Activated B cell treated with CpG ODN at 0.5 μM for 24 hours (primary cell): ENCODE measurements at regions of chr12 and their contacts with region 1.

Region 1: DNA sequence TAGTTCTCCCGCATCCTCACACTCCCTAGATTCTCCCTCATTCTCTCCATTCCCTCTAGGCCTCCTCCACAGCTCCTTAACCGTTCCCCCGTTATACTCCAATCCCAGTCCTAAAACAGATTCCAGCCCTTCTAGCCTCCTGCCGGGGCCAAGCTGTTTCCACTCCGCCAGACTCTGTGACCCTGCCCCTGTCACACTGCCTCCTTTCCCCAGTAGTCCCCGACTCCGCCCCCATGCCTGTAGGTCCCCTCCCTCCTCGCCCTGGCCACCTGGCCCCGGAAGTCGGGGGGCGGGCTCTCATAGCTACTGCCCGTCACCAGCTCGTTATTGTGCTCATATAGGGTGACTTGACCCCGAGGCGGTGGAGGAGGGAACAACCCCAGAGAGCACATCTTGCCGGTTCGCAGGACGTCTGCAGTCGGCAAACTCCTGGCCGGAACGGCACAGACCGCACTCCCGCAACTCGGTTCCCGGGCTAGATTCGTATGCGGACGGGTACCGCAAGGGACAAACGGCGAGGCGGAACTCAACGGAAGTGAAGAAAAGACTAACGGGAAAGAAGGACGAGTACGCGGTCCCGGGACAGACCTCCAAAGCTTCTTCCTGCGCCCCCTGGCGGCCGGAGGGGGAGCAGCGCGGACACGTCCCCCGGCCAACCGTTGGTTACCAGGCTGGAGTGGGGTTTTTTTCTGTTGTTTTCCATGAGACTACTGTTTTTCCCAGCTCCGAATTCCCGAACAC is at the start of gene AAAS:
- DNase-seq: peak; percentile 93
- ATAC-seq: peak; percentile 84
- H3K4me3 Mint-ChIP-seq: peak within 1 kb of the TSS; percentile 95
- H3K27ac Mint-ChIP-seq: peak within 1 kb of the TSS; percentile 95
- H3K4me1 Mint-ChIP-seq: peaks cover 36% of the 10 kb centered on the region
- H3K27me3 Mint-ChIP-seq: no peaks in the 10 kb centered on the region
- CTCF ChIP-seq: peak; percentile 57
- total RNA-seq, gene AAAS: 57.3 and 72.1 TPM in 2 replicates

Region 2: DNA sequence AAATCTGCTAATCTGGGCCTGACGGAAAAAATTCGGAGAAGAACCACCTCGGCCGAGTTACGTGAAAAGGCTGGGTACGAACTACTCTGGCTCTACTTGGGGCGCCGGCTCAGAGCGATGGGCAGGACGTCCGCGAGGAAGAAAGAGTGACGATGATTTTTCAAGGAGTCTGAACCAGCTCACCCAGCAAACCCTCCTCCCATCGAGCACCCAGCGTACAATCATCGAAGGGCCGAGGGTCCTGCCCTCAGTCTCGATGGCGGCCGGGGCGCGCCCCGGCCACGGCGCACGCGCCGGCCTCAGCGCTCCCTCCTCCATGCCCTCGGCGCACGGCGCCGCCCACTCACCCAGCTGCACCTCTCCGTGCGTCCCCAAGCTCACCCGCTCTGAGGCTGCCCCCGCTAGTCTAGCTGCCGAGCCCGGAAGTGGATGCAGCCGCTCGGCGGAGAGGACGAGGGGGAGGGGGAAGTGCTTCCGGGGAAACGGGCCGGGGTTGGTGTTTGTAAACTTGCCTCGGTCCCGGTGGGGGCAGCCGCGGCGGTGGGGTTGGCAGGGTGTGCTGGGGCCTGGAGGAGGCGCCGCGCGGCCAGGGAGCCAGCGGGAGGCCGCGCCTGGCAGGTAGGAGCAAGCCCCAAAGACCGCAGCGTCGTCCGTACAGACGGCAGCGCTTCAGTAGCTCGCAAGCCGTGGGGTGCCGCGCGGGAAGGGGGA is 140.9 kb before region 1 on chr12 and contains the starts of genes CSAD and ZNF740:
- CTCF ChIA-PET with region 1: interaction called, 3 read pairs
- POLR2A ChIA-PET with region 1: interaction called, 8 read pairs
- intact Hi-C with region 1: loop called (anchors 1 kb)
- DNase-seq: peak; percentile 91
- ATAC-seq: peak; percentile 94
- H3K4me3 Mint-ChIP-seq: peak within 1 kb of the TSS; percentile 93
- H3K27ac Mint-ChIP-seq: peak within 1 kb of the TSS; percentile 98
- H3K4me1 Mint-ChIP-seq: peaks cover 53% of the 10 kb centered on the region
- H3K27me3 Mint-ChIP-seq: no peaks in the 10 kb centered on the region
- CTCF ChIP-seq: no peak
- total RNA-seq, gene CSAD: 25.7 and 34.6 TPM in 2 replicates
- total RNA-seq, gene ZNF740: 64.4 and 67.2 TPM in 2 replicates

Region 3: GRCh38 chr12:53251477-53252348 is 69.5 kb before region 1 on chr12:
- CTCF ChIA-PET with region 1: no interaction called
- POLR2A ChIA-PET with region 1: interaction called, 10 read pairs
- intact Hi-C with region 1: loop called (anchors 1 kb)
- DNase-seq: peak; percentile 77
- ATAC-seq: peak; percentile 76
- H3K4me3 Mint-ChIP-seq: peak overlapping the region; percentile 98
- H3K27ac Mint-ChIP-seq: peak overlapping the region; percentile 90
- H3K4me1 Mint-ChIP-seq: peaks cover 49% of the 10 kb centered on the region
- H3K27me3 Mint-ChIP-seq: no peaks in the 10 kb centered on the region
- CTCF ChIP-seq: no peak

Region 4: GRCh38 chr12:53302903-53303302 is 18.3 kb before region 1 on chr12:
- CTCF ChIA-PET with region 1: interaction called, 37 read pairs
- POLR2A ChIA-PET with region 1: interaction called, 114 read pairs
- intact Hi-C with region 1: loop called (anchors 1 kb)
- DNase-seq: no peak
- ATAC-seq: no peak
- H3K4me3 Mint-ChIP-seq: peak overlapping the region; percentile 2
- H3K27ac Mint-ChIP-seq: no peak overlapping the region
- H3K4me1 Mint-ChIP-seq: peaks cover 41% of the 10 kb centered on the region
- H3K27me3 Mint-ChIP-seq: no peaks in the 10 kb centered on the region
- CTCF ChIP-seq: no peak

Region 5: GRCh38 chr12:53441040-53441833 is 120.0 kb after region 1 on chr12 and contains the start of gene PRR13:
- CTCF ChIA-PET with region 1: interaction called, 3 read pairs
- POLR2A ChIA-PET with region 1: interaction called, 6 read pairs
- intact Hi-C with region 1: loop called (anchors 1 kb)
- DNase-seq: peak; percentile 88
- ATAC-seq: peak; percentile 98
- H3K4me3 Mint-ChIP-seq: peak within 1 kb of the TSS; percentile 93
- H3K27ac Mint-ChIP-seq: peak within 1 kb of the TSS; percentile 93
- H3K4me1 Mint-ChIP-seq: peaks cover 40% of the 10 kb centered on the region
- H3K27me3 Mint-ChIP-seq: no peaks in the 10 kb centered on the region
- CTCF ChIP-seq: no peak
- total RNA-seq, gene PRR13: 266 and 288 TPM in 2 replicates

Region 6: GRCh38 chr12:53508534-53509199 is 187.4 kb after region 1 on chr12:
- CTCF ChIA-PET with region 1: interaction called, 22 read pairs
- POLR2A ChIA-PET with region 1: interaction called, 6 read pairs
- intact Hi-C with region 1: loop called (anchors 1 kb)
- DNase-seq: peak; percentile 77
- ATAC-seq: peak; percentile 100
- H3K4me3 Mint-ChIP-seq: no peak overlapping the region
- H3K27ac Mint-ChIP-seq: peak overlapping the region; percentile 66
- H3K4me1 Mint-ChIP-seq: peaks cover 10% of the 10 kb centered on the region
- H3K27me3 Mint-ChIP-seq: no peaks in the 10 kb centered on the region
- CTCF ChIP-seq: peak; percentile 63